ENCODE measurements at regions of chr6 and their contacts with region 1.

Region 1: GRCh38 chr6:3125815-3126214 is 7.3 kb downstream of the BPHL start:
- DNase-seq: no peak
- H3K4me3 ChIP-seq: no peak overlapping the region
- H3K27ac ChIP-seq: no peak overlapping the region
- H3K4me1 ChIP-seq: peaks cover 3% of the 10 kb centered on the region
- H3K27me3 ChIP-seq: no peaks in the 10 kb centered on the region
- CTCF ChIP-seq: no peak

Region 2: GRCh38 chr6:3251462-3252314 is 125.9 kb after region 1 on chr6:
- intact Hi-C with region 1: loop called (anchors 2 kb)
- DNase-seq: peak; percentile 93
- H3K4me3 ChIP-seq: no peak overlapping the region
- H3K27ac ChIP-seq: no peak overlapping the region
- H3K4me1 ChIP-seq: no peaks in the 10 kb centered on the region
- H3K27me3 ChIP-seq: peaks cover 5% of the 10 kb centered on the region
- CTCF ChIP-seq: peak; percentile 96

Region 3: GRCh38 chr6:3732345-3733141 is 606.7 kb after region 1 on chr6:
- intact Hi-C with region 1: loop called (anchors 10 kb)
- DNase-seq: peak; percentile 78
- H3K4me3 ChIP-seq: no peak overlapping the region
- H3K27ac ChIP-seq: no peak overlapping the region
- H3K4me1 ChIP-seq: no peaks in the 10 kb centered on the region
- H3K27me3 ChIP-seq: no peaks in the 10 kb centered on the region
- CTCF ChIP-seq: peak; percentile 72